ENCODE measurements at regions of chr1 and their contacts with region 1.

Region 1: GRCh38 chr1:21255278-21255942 is 34.9 kb downstream of the ECE1 start:
- DNase-seq: peak; percentile 85
- H3K4me3 ChIP-seq: no peak overlapping the region
- H3K27ac ChIP-seq: no peak overlapping the region
- H3K4me1 ChIP-seq: peaks cover 27% of the 10 kb centered on the region
- H3K27me3 ChIP-seq: no peaks in the 10 kb centered on the region
- CTCF ChIP-seq: peak; percentile 78 to 88
- POLR2A ChIP-seq: no peak

Region 2: DNA sequence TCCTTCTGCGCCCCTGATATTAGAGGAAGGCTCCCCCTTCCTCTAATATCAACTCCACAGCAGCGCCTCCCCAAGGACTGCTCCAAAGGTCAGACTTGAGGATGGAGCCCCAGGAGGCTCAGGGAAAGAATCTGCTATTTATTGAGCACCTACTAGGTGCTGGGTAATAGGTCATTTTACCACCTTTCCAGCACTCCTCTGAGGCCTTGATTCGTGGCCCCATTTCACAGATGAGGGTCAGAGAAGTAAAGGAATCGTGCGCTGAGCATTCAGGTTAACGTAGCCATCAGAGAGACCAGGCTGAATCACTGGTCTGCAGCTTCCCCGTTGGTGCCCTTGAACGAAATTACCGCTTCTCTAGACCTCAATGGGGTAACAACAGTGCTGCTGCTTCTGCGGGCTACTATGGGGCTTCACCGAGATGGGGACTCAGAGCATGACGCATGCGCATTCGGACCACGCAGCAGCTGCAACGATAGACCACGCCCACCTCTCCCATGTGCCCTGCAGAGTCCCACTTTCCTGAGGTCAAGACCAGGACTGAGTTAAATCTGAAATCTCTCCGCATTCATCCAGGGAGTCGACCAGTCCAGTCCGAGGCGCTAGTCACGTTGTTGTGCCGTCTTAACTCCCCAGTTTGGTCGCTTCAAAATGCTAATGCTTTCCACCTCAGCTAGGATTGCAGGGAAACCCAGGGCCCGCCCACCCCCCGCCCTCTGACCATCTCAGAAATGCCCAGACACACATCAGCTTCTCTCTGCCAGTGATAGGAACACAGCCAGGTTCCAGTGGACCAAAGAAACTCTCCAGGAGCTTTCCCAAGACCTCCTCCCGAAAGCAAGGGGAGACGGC is 782.3 kb before region 1 on chr1:
- CTCF ChIA-PET with region 1: no interaction called
- POLR2A ChIA-PET with region 1: no interaction called
- dilution Hi-C with region 1: no loop called
- intact Hi-C with region 1: no loop called
- DNase-seq: peak; percentile 62
- H3K4me3 ChIP-seq: no peak overlapping the region
- H3K27ac ChIP-seq: no peak overlapping the region
- H3K4me1 ChIP-seq: peaks cover 5% of the 10 kb centered on the region
- H3K27me3 ChIP-seq: peaks cover 2 to 3% of the 10 kb centered on the region in 2 experiments
- CTCF ChIP-seq: no peak
- POLR2A ChIP-seq: no peak

Region 3: GRCh38 chr1:21244986-21245687 is 10.3 kb before region 1 on chr1:
- CTCF ChIA-PET with region 1: interaction called, 24 read pairs
- POLR2A ChIA-PET with region 1: no interaction called
- dilution Hi-C with region 1: no loop called
- intact Hi-C with region 1: no loop called
- DNase-seq: no peak
- H3K4me3 ChIP-seq: no peak overlapping the region
- H3K27ac ChIP-seq: no peak overlapping the region
- H3K4me1 ChIP-seq: no peaks in the 10 kb centered on the region
- H3K27me3 ChIP-seq: no peaks in the 10 kb centered on the region
- CTCF ChIP-seq: peak; percentile 57 to 65
- POLR2A ChIP-seq: no peak

Region 4: DNA sequence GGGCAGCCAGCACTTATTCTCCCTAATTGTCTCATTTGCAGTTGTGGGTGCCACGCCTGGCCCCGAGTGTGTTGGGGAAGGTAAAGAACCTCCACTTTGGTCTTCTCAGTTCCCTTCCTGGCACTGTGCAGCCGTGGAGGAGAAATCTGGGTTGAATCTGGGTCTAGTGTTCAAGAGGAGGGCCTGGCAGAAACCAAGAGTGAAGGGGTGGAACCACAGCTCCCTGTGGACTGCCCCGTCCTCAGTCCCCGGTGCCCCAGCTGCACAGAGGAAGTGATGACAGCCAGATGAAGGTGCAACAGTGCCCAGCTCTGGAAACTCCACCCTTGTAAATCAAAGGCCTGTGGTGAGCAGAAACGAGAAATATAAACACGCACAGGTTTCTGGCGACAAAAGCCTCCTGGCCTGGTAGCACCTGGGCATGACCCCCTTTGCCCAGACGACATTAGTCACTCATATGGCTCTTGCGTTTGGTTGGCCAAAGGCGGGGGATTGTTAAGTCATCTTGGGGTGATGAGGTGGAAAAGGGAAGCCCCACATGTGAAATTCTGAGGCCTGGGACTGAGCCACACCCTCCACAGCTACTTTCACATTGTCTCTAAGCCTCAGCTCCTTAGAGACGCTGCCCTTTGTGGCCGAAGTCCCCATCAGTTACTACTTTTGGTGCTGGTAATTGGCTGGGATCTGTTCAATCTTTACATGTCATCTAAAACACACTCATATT is 39.0 kb after region 1 on chr1:
- CTCF ChIA-PET with region 1: interaction called, 24 read pairs
- POLR2A ChIA-PET with region 1: no interaction called
- dilution Hi-C with region 1: no loop called
- intact Hi-C with region 1: no loop called
- DNase-seq: no peak
- H3K4me3 ChIP-seq: no peak overlapping the region
- H3K27ac ChIP-seq: peak overlapping the region; percentile 36
- H3K4me1 ChIP-seq: peaks cover 33% of the 10 kb centered on the region
- H3K27me3 ChIP-seq: no peaks in the 10 kb centered on the region
- CTCF ChIP-seq: no peak
- POLR2A ChIP-seq: no peak

Region 5: DNA sequence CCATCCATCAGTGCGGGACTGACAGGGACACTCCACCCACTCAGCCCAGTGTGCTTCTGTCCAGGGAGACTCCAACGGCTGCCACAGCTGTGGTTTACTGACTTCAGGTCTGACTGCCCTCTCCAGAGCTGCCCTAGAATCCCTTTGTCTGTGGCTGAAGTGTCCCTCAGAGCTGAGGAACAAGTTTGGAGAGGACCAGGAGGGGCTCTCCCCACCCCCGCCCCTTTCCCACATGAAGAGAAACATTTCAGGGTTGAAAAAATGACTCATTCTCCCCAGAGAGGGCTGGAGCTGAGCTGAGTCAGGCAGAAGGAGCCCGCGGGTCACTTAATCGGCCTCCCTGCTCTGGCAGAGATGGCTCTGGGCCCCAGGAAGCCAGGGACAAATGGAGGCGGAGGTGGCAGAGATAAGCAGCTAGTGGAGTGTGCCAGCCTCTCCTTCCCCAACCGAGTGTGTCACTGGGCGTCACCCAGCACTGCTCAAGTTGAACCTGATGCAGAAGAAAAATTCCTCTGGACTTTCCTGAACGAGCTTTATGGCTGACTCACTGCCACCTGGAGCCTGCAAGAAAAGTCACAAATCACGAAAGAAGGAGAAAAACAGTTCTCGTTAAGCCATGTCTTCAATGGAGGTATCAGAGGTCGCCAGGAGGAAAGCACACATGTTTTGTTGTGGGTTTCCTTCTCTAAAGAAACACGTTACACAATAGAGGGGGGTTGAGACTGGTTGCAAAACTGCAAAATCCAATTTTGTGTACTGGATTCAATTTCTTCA is 69.1 kb after region 1 on chr1:
- CTCF ChIA-PET with region 1: interaction called, 47 read pairs
- POLR2A ChIA-PET with region 1: no interaction called
- dilution Hi-C with region 1: no loop called
- intact Hi-C with region 1: no loop called
- DNase-seq: peak; percentile 93
- H3K4me3 ChIP-seq: no peak overlapping the region
- H3K27ac ChIP-seq: peak overlapping the region; percentile 96
- H3K4me1 ChIP-seq: peaks cover 62% of the 10 kb centered on the region
- H3K27me3 ChIP-seq: no peaks in the 10 kb centered on the region
- CTCF ChIP-seq: no peak
- POLR2A ChIP-seq: peak; percentile 39

Region 6: GRCh38 chr1:21350187-21350885 is 94.9 kb after region 1 on chr1:
- CTCF ChIA-PET with region 1: interaction called, 29 read pairs
- POLR2A ChIA-PET with region 1: no interaction called
- dilution Hi-C with region 1: no loop called
- intact Hi-C with region 1: no loop called
- DNase-seq: no peak
- H3K4me3 ChIP-seq: no peak overlapping the region
- H3K27ac ChIP-seq: no peak overlapping the region
- H3K4me1 ChIP-seq: peaks cover 5% of the 10 kb centered on the region
- H3K27me3 ChIP-seq: no peaks in the 10 kb centered on the region
- CTCF ChIP-seq: no peak
- POLR2A ChIP-seq: no peak